Common myeloid progenitor, CD34-positive (primary cell): ENCODE measurements at regions of chr6 and their contacts with region 1.

Region 1: GRCh38 chr6:147311218-147311617 is 107.0 kb downstream of the STXBP5 start:
- DNase-seq: no peak
- H3K4me3 ChIP-seq: no peak overlapping the region
- H3K27ac ChIP-seq: no peak overlapping the region
- H3K4me1 ChIP-seq: no peaks in the 10 kb centered on the region
- H3K27me3 ChIP-seq: no peaks in the 10 kb centered on the region

Region 2: GRCh38 chr6:147322299-147323162 is 11.3 kb after region 1 on chr6:
- CTCF ChIA-PET with region 1: interaction called, 10 read pairs
- POLR2A ChIA-PET with region 1: no interaction called
- DNase-seq: peak; percentile 78 to 97 (median 94)
- H3K4me3 ChIP-seq: peak overlapping the region in 6 of 7 experiments; percentile 9 to 75 (median 50)
- H3K27ac ChIP-seq: peak overlapping the region; percentile 61 to 78
- H3K4me1 ChIP-seq: peaks cover 14 to 32% (median 25%) of the 10 kb centered on the region in 4 experiments
- H3K27me3 ChIP-seq: no peaks in the 10 kb centered on the region